ENCODE measurements at regions of chr3 and their contacts with region 1.

Region 1: GRCh38 chr3:17227472-17227871 is 342.7 kb downstream of the PLCL2 start:
- DNase-seq: no peak
- ATAC-seq: no peak
- H3K4me3 ChIP-seq: no peak overlapping the region
- H3K27ac ChIP-seq: no peak overlapping the region
- H3K4me1 ChIP-seq: peaks cover 0 to 7% (median 0%) of the 10 kb centered on the region in 3 donors
- H3K27me3 ChIP-seq: no peaks in the 10 kb centered on the region
- CTCF ChIP-seq: no peak

Region 2: DNA sequence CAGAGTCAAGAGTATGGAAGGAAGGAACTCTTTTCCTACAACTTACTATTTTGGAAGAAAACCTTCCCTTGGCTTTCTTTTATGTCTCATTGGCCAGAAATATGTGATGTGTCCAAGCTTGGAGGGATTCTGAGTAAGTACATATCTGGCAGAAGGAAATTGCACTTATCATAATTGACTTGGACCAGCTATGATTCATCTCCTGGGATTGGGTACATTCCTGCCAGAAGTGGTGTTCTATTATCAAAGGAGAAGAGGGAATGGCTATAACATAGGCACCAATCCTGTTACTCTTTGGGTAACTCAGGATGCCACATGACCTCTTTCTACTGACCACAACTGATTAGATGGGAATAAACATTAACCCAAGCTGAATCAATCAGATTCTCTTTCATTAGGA is 608.8 kb before region 1 on chr3:
- intact Hi-C with region 1: loop called in 1 of 3 experiments (anchors 10 kb)
- DNase-seq: no peak
- ATAC-seq: no peak
- H3K4me3 ChIP-seq: no peak overlapping the region
- H3K27ac ChIP-seq: no peak overlapping the region
- H3K4me1 ChIP-seq: peaks cover 0 to 7% (median 5%) of the 10 kb centered on the region in 3 donors
- H3K27me3 ChIP-seq: no peaks in the 10 kb centered on the region
- CTCF ChIP-seq: no peak

Measured in pancreas (tissue), 10 donors.